ENCODE measurements at regions of chr4 and their contacts with region 1.

Region 1: DNA sequence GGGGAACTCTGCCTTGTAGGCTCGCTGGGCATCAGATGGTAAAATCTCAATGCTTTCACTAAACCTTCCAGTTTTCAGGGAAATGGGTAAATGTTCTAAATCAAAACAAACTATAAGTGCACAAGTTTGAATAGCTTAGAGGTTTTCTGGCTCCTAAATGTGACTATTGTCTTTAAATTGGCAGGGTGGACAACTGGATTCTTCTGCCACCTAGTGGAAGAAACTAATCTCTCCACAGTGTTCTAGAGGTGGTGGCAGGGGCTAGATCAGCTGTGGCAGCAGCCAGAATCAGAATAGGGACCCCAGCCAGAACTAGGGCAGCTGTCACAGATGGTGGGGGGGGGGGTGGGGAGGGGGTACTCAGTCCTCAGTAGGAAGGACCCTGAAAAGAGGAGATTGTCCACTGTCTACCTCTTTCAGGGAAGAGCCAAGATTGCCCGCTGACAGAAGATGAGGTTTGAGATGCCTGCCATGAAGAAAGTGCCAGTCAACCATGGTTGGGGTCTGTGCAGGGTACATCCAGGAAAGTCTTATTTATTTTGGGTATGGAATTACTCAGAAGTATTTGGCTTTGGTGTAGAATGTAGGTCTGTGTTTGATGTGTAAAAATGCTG is 201.4 kb downstream of the CCNG2 start:
- DNase-seq: peak; percentile 26
- H3K4me3 ChIP-seq: no peak overlapping the region
- H3K27ac ChIP-seq: no peak overlapping the region
- H3K4me1 ChIP-seq: no peaks in the 10 kb centered on the region
- H3K27me3 ChIP-seq: no peaks in the 10 kb centered on the region
- CTCF ChIP-seq: peak; percentile 46

Region 2: DNA sequence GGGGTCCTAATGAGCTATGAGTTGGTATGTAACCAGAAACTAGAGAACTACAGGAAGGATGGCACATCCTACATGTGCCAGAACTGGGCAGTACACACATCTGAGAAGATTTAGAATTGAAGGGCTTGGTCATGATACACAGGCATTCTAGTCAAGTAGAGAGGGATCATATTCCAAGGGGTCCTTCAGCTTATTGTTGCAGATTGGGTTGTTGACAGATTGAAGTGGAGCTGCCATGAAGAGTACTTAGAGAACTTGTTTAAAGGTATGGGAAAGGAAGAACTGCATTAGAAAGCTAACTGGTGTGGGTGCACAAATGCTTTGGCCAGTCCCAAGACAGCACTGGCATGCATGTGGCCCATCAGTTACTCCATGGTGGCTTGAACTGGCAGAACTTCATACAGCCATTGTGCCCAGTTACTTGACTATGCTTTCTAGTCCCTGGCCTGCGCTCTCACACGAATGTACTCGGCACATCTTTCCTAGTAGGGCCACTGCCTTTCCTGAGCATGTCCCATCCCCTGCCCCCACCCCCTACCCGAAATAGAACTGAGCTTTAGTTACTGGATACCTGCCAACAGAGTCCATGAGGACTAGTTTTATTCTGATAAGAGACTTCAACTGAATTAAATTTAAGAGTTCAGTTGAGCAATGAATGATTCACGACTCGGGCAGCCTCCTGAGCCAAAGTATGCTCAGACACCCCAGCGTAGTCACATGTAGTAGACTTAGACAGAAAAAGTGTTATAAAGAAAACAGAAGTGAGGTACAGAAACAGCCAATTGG is 137.4 kb before region 1 on chr4:
- intact Hi-C with region 1: no loop called
- DNase-seq: no peak
- H3K4me3 ChIP-seq: no peak overlapping the region
- H3K27ac ChIP-seq: no peak overlapping the region
- H3K4me1 ChIP-seq: no peaks in the 10 kb centered on the region
- H3K27me3 ChIP-seq: no peaks in the 10 kb centered on the region
- CTCF ChIP-seq: no peak

Region 3: GRCh38 chr4:77240469-77241066 is 117.9 kb before region 1 on chr4:
- intact Hi-C with region 1: loop called (anchors 1 kb)
- DNase-seq: peak; percentile 68
- H3K4me3 ChIP-seq: no peak overlapping the region
- H3K27ac ChIP-seq: no peak overlapping the region
- H3K4me1 ChIP-seq: no peaks in the 10 kb centered on the region
- H3K27me3 ChIP-seq: no peaks in the 10 kb centered on the region
- CTCF ChIP-seq: peak; percentile 73

Measured in colonic mucosa (tissue), 4 donors.